CD8-positive, alpha-beta memory T cell (primary cell): ENCODE measurements at regions of chr16 and their contacts with region 1.

Region 1: GRCh38 chr16:56635441-56635967 is 3.0 kb upstream of the MT1A start:
- DNase-seq: no peak
- H3K4me3 ChIP-seq: peak overlapping the region; percentile 11
- H3K4me3 Mint-ChIP-seq: peak overlapping the region in 6 of 7 donors; percentile 38 to 87 (median 62)
- H3K27ac ChIP-seq: no peak overlapping the region
- H3K27ac Mint-ChIP-seq: peak overlapping the region in 1 of 8 donors; percentile 39
- H3K4me1 ChIP-seq: peaks cover 27% of the 10 kb centered on the region
- H3K4me1 Mint-ChIP-seq: peaks cover 25 to 50% (median 33%) of the 10 kb centered on the region in 3 donors
- H3K27me3 ChIP-seq: peaks cover 79% of the 10 kb centered on the region
- H3K27me3 Mint-ChIP-seq: peaks cover 78 to 92% of the 10 kb centered on the region in 2 donors

Region 2: DNA sequence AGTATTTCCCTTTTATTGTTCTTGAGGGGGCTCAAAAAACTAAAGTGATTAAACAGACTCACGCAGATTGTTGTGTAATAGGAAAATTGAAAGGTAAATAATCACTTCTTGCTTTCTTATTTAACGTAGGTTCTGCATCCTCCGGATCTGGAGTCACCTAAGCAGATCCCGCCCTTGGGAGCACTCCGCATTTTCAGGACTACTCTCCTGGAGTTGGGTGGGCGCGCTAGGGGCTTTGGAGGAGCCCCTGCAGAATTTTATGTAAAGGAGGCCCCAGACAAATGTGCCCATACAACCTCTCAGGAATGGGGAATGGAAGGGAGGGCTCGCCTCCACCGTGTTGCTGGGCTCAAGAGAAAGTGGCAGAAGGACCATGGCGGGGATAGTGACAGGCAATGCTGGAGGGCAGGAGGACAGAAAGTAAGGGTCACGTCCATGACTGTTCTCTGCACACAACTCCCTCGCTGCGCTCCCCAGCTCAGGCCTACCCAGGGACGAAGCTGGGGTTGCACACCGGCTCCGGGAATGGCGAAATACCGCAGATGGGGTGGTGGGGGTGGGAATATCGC is 18.8 kb before region 1 on chr16:
- CTCF ChIA-PET with region 1: no interaction called
- POLR2A ChIA-PET with region 1: interaction called, 14 read pairs
- DNase-seq: no peak
- H3K4me3 ChIP-seq: no peak overlapping the region
- H3K4me3 Mint-ChIP-seq: peak overlapping the region in 5 of 7 donors; percentile 39 to 79 (median 70)
- H3K27ac ChIP-seq: no peak overlapping the region
- H3K27ac Mint-ChIP-seq: peak overlapping the region in 1 of 8 donors; percentile 17
- H3K4me1 ChIP-seq: peaks cover 4% of the 10 kb centered on the region
- H3K4me1 Mint-ChIP-seq: peaks cover 6 to 14% (median 6%) of the 10 kb centered on the region in 3 donors
- H3K27me3 ChIP-seq: peaks cover 8% of the 10 kb centered on the region
- H3K27me3 Mint-ChIP-seq: peaks cover 4 to 11% of the 10 kb centered on the region in 2 donors

Region 3: DNA sequence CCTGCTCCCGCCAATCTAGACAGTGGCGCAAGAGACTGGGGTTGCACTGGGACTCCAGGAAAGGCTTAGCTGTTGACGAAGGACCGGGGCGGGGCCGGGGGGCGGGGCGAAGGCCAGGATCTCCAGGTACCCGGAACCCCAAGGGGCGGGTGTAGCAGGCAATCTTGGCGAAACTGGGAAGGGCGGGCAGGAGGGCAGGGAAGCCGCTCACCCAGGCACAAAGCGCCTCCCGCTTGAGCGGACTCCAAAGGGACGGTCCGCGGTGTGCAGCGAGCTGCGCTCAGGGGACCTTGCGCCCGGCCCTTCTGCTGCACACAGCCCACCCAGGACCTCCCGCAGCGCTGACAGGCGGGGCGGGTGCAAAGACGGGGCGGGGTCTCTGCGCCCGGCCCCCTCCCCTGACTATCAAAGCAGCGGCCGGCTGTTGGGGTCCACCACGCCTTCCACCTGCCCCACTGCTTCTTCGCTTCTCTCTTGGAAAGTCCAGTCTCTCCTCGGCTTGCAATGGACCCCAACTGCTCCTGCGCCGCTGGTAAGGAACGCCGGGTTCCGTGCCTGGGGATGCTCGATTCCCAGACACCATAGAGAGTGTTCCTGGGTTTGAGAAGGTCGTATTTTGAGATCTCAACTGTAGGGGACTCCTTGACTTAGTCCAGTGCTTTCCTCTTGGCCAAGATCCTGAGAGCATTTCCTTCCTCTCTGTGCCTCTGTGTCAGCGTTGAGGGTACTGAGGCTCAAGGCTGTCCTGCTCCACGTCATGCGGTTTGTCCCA is 22.2 kb after region 1 on chr16 and contains the start of gene MT1F:
- CTCF ChIA-PET with region 1: no interaction called
- POLR2A ChIA-PET with region 1: interaction called, 14 read pairs
- DNase-seq: peak; percentile 55 to 84 (median 68)
- H3K4me3 ChIP-seq: peak within 1 kb of the TSS; percentile 80
- H3K4me3 Mint-ChIP-seq: peak within 1 kb of the TSS; percentile 92 to 98 (median 95)
- H3K27ac ChIP-seq: peak within 1 kb of the TSS; percentile 51
- H3K27ac Mint-ChIP-seq: peak within 1 kb of the TSS; percentile 51 to 99 (median 94)
- H3K4me1 ChIP-seq: peaks cover 21% of the 10 kb centered on the region
- H3K4me1 Mint-ChIP-seq: peaks cover 24 to 48% (median 43%) of the 10 kb centered on the region in 3 donors
- H3K27me3 ChIP-seq: no peaks in the 10 kb centered on the region
- H3K27me3 Mint-ChIP-seq: peaks cover 1 to 10% of the 10 kb centered on the region in 2 donors
- total RNA-seq, gene MT1F: 17.9 to 18.6 TPM